ENCODE measurements at regions of chr22 and their contacts with region 1.

Region 1: DNA sequence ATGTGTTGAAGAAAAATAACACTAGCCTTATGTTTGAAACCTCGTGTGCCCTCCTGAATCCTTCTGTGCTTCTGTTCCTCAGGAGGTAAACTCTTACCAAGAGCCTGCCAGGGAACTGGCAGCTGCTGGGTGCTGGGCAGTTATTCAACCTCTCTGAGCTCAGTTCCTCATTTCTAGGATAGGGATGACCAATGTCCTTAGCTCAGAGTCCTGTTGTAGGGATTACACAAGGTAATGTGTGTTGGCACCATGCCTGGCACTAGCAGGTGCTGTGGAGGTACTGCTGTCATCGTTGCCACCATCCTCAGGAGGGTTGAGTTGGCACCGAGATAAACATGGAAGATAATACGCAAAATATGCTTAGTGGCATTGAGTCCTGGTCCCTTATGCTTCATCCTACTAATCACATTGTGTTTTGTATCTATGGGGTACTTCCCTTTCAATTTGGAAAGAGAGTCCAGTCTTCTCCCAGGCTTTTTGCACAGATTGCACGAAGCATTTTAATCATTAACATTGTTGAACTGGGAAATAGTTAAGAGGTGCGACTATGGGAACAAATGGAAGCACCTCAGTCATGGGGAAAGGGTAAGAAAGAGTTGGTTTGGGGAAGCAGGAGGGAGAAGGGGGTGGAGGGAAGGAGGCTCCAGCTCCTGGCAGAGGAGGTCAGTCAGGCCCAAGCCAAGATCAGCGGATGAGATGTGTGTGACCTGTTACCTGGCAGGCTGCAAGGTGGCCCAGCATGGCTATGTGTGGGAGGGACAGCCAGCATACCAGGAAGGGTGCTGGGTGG is 56.7 kb downstream of the CABIN1 start:
- DNase-seq: no peak
- ATAC-seq: no peak

Region 2: GRCh38 chr22:24091551-24092420 is 24.0 kb after region 1 on chr22:
- intact Hi-C with region 1: loop called (anchors 2 kb)
- DNase-seq: peak; percentile 83
- ATAC-seq: peak; percentile 92